Pancreas (tissue), 10 donors: ENCODE measurements at regions of chr6 and their contacts with region 1.

Region 1: GRCh38 chr6:53651764-53652401 is 13.7 kb downstream of the KLHL31 start:
- DNase-seq: peak; percentile 81 to 93 (median 90)
- ATAC-seq: peak; percentile 93 to 97 (median 95)
- H3K4me3 ChIP-seq: peak overlapping the region; percentile 39 to 81 (median 56)
- H3K27ac ChIP-seq: peak overlapping the region; percentile 85 to 94 (median 88)
- H3K4me1 ChIP-seq: peaks cover 0 to 5% (median 0%) of the 10 kb centered on the region in 3 donors
- H3K27me3 ChIP-seq: no peaks in the 10 kb centered on the region
- CTCF ChIP-seq: peak in 2 of 4 donors; percentile 29 to 31

Region 2: GRCh38 chr6:53481323-53481722 is 170.6 kb before region 1 on chr6:
- intact Hi-C with region 1: no loop called
- DNase-seq: no peak
- ATAC-seq: no peak
- H3K4me3 ChIP-seq: no peak overlapping the region
- H3K27ac ChIP-seq: no peak overlapping the region
- H3K4me1 ChIP-seq: no peaks in the 10 kb centered on the region
- H3K27me3 ChIP-seq: no peaks in the 10 kb centered on the region
- CTCF ChIP-seq: no peak

Region 3: DNA sequence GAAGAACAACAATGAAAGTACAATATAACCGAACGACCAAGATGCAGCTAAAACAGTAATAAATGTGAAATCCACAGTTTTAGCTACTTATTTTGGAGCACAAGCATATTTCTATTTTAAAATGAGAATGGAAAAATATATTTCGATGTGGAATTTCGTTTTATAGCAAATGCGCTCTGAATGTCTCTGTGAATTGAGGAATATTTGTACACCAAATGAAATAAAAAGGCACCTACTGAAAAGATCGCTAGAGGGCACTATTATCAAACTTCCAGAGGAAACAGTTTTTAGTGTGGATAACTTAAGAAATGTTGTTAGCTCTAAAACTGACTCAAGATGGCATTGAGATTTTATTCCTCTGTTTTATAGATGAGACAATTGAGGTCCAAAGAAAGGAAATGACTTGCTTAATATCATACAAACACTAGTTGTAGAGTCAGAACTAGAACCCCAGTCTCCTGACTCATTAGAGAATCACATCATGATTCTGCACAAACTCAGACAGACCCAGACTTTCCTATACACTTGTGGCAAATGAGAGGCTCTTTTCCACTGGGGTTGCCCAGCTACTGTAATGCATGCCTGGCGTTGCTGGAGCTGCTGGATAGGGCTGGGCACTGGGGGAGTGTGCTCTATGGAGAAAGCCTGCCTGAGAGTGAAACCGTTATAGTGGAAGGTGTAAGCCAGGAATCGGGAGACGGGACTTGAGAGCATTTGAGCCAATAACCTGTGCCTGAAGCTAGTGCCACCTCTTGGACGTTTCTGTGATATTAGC is 158.8 kb before region 1 on chr6:
- intact Hi-C with region 1: loop called in 2 of 3 experiments (anchors 10 kb)
- DNase-seq: peak in 1 of 6 donors; percentile 19
- ATAC-seq: peak; percentile 60 to 90 (median 85)
- H3K4me3 ChIP-seq: peak overlapping the region in 1 of 4 donors; percentile 4
- H3K27ac ChIP-seq: no peak overlapping the region
- H3K4me1 ChIP-seq: peaks cover 0 to 22% (median 6%) of the 10 kb centered on the region in 3 donors
- H3K27me3 ChIP-seq: no peaks in the 10 kb centered on the region
- CTCF ChIP-seq: peak; percentile 25 to 55 (median 40)

Region 4: GRCh38 chr6:53524455-53524815 is 127.4 kb before region 1 on chr6:
- intact Hi-C with region 1: loop called in 1 of 3 experiments (anchors 10 kb)
- DNase-seq: no peak
- ATAC-seq: peak; percentile 39 to 60 (median 57)
- H3K4me3 ChIP-seq: no peak overlapping the region
- H3K27ac ChIP-seq: peak overlapping the region in 2 of 4 donors; percentile 24 to 33
- H3K4me1 ChIP-seq: peaks cover 14 to 33% (median 32%) of the 10 kb centered on the region in 3 donors
- H3K27me3 ChIP-seq: no peaks in the 10 kb centered on the region
- CTCF ChIP-seq: no peak

Region 5: GRCh38 chr6:54377776-54378175 is 725.9 kb after region 1 on chr6:
- intact Hi-C with region 1: no loop called
- DNase-seq: no peak
- ATAC-seq: no peak
- H3K4me3 ChIP-seq: no peak overlapping the region
- H3K27ac ChIP-seq: no peak overlapping the region
- H3K4me1 ChIP-seq: no peaks in the 10 kb centered on the region
- H3K27me3 ChIP-seq: no peaks in the 10 kb centered on the region
- CTCF ChIP-seq: no peak